ENCODE measurements at regions of chr5 and their contacts with region 1.

Region 1: DNA sequence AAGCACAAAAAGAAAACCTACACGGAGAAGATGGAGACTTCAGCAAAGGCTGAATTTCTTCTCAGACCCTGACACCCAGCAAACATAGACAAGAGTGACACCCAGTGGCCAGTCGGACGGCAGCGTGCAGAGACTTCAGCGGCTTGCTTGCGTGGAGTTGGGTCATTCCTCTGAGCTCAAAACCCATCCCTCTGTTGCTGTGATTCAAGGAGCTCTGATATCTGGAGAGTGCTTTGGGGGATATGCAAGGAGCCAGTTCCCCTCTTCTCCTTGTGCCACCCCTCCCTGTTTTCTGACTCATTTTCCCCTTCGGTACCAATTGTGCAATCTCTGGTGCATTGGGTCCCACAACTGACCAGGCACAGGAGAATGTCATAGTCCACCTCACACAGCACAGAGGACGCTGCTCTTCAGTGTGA is 27.5 kb downstream of the SH3TC2 start:
- DNase-seq: peak; percentile 89
- H3K4me3 Mint-ChIP-seq: no peak overlapping the region
- H3K27ac Mint-ChIP-seq: no peak overlapping the region
- H3K4me1 Mint-ChIP-seq: peaks cover 28% of the 10 kb centered on the region
- H3K27me3 Mint-ChIP-seq: peaks cover 3% of the 10 kb centered on the region

Region 2: GRCh38 chr5:148826053-148826738 is 209.2 kb before region 1 on chr5 and contains the start of gene ADRB2:
- intact Hi-C with region 1: loop called (anchors 10 kb)
- DNase-seq: peak; percentile 96
- H3K4me3 Mint-ChIP-seq: peak within 1 kb of the TSS; percentile 90
- H3K27ac Mint-ChIP-seq: peak within 1 kb of the TSS; percentile 65
- H3K4me1 Mint-ChIP-seq: peaks cover 11% of the 10 kb centered on the region
- H3K27me3 Mint-ChIP-seq: peaks cover 73% of the 10 kb centered on the region
- total RNA-seq, gene ADRB2: 0.37 and 0.50 TPM in 2 replicates

Region 3: DNA sequence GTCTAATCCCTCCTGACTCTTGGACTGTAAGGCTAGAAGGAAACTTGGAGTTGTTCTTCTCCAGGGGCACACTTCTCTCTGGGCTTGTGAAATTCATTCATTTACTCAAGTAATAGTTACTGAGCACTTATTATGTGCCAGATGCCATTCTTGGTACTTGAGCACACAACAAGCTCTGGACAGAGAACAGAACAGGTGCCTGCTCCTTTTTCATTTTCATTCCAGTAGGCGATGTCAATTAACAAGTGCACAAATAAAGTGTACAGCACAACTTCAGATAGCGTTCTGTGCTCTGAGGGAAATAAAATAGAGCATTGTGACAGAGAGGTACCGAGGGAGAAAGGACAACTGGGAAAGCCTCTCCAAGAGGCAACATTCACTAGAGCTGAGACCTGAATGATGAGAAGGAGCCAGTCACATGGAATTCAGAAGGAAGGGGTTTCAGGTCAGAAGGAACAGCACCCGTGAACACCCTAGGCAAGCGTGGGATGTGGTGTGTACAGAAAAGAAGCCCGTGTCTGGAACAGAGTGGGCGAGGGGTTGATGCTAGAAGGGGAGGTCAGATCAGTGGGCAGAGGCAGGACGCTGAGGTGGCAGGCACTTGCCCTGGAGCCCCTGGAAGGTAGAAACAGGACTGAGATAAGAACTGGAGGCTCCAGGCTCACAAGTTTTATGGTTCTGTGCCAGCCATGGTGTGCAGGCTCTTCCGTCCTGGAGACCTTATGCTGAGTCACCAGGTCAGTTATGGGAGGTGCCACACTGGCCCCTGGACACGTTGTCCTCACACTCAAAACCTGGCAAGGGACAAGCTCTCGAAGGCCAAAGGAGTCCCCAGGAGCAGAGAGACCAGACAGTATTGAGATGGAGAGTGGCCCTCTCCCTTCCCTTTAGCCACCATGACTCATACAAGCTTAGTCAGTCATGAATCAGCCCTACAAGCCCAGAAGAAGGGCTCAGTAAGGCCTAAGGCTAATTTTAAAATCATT is 98.7 kb after region 1 on chr5:
- intact Hi-C with region 1: no loop called
- DNase-seq: no peak
- H3K4me3 Mint-ChIP-seq: no peak overlapping the region
- H3K27ac Mint-ChIP-seq: no peak overlapping the region
- H3K4me1 Mint-ChIP-seq: no peaks in the 10 kb centered on the region
- H3K27me3 Mint-ChIP-seq: peaks cover 24% of the 10 kb centered on the region

Region 4: DNA sequence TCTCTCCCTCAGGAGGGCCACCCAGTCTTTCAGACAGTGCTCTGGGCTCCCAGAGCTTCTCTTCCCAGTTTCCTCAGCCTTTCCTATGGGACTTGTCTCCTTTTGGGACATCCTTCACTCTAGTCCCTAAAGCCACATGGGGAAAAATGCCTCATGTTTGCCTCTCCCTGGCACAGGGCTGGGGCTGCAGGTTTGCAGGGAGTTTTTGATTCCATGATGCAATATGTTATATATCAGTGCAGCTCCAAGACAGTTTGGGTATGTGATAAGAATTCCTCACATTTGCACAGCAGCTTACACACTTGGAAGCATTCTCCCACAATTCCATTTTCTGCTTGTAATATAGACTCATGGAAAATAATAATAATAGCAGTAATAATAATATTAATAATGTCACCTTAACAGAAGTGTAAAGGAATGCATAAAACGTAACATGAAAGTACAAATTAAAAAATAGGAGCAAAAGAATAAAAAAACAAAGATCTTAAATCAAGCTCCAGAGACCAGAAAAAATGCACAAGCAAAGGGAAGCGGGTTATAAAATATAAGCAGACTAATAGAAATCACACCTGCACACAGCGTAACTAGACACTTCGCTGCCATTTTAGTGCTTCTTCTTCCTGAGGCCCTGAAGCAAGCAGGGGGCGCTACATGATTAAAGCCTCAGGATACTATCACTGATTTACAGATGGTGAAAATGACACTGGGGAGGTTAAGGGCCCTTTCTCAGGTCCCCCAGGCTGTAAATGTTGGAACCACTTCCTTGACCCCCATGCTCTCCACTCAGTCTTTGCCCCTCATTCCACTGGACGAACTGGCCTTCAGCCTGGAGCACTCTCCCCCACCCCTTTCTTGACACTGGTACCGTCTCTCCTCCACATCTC is 413.7 kb after region 1 on chr5:
- intact Hi-C with region 1: no loop called
- DNase-seq: no peak
- H3K4me3 Mint-ChIP-seq: no peak overlapping the region
- H3K27ac Mint-ChIP-seq: no peak overlapping the region
- H3K4me1 Mint-ChIP-seq: peaks cover 2% of the 10 kb centered on the region
- H3K27me3 Mint-ChIP-seq: peaks cover 3% of the 10 kb centered on the region